ENCODE measurements at regions of chr9 and their contacts with region 1.

Region 1: DNA sequence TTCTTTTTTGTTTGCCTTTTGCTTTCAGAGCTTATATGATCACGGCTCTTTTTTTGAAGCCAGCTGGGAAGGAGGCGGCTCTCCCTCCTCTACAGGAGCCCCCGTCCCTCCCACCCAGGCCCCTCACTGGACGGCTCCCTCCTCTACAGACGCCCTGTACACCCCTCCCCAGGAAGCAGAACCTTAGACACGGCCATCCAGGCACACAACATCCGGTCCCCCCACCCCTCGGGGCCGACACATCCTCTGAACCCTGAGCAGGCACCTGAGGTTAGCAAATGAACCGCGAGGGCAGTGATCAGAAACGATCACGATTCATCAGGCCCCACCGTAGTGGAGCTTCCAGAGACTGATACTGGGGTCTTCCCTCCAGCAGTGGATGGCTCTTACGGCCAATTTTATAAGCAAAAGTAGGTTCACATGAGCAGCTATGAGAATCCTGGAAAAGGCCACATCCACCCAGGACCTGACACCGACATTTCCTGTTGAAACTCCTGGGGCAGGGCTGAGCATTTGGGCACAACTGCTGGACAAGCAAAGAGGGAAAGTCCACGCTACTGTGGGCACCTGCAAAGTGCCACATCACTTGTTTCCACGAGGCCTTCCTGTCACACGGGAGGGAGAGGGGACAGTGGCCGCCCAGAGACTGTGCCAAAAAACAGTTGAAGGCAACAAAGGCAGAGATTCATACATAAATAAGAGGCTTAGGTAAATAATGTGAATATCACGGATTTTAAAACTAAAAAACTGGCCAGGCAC is 78.9 kb downstream of the SEMA4D start:
- DNase-seq: peak; percentile 87
- H3K4me3 Mint-ChIP-seq: peak overlapping the region; percentile 78
- H3K27ac Mint-ChIP-seq: peak overlapping the region; percentile 97
- H3K4me1 Mint-ChIP-seq: peaks cover 99% of the 10 kb centered on the region
- H3K27me3 Mint-ChIP-seq: no peaks in the 10 kb centered on the region

Region 2: GRCh38 chr9:89281106-89281505 is 138.0 kb before region 1 on chr9:
- CTCF ChIA-PET with region 1: no interaction called
- POLR2A ChIA-PET with region 1: no interaction called
- DNase-seq: no peak
- H3K4me3 Mint-ChIP-seq: no peak overlapping the region
- H3K27ac Mint-ChIP-seq: no peak overlapping the region
- H3K4me1 Mint-ChIP-seq: peaks cover 24% of the 10 kb centered on the region
- H3K27me3 Mint-ChIP-seq: peaks cover 6% of the 10 kb centered on the region

Region 3: DNA sequence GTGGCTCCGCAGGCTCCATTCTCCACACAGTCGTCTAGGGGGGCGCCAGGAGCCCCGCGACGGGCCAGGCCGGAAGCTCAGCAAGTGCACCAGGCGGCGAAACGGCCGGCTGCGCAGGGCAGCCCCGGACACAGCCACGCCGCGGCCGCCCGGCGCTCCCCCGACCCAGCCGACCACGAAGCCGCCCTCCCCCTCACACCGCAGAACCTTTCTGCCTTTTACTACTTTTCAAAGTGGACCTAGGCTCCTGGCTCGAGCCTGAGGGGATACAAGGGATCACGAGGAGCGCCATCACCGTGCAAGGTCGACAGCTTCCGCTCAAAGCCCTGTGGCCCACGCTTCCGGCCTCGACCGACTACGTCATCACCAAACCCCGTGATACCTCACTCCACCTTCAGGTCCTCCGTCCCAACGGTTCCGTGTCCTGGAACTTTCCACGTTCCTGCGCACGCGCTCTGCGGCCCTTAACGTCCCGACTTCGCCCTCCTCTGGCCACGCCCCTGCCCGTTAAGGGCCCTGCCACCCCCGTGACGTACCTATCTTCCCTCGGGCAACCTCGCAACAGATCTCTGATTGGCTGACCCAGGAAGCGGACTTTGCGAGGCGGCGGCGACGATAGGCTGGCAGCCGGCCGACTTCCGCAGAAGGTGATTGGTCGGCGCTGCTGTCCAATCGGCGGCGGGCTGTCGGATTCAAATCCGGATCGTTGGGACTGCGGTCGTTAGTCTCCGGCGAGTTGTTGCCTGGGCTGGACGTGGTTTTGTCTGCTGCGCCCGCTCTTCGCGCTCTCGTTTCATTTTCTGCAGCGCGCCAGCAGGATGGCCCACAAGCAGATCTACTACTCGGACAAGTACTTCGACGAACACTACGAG is 108.3 kb before region 1 on chr9 and contains the start of gene CKS2:
- CTCF ChIA-PET with region 1: no interaction called
- POLR2A ChIA-PET with region 1: interaction called, 12 read pairs
- DNase-seq: peak; percentile 100
- H3K4me3 Mint-ChIP-seq: peak within 1 kb of the TSS; percentile 95
- H3K27ac Mint-ChIP-seq: peak within 1 kb of the TSS; percentile 98
- H3K4me1 Mint-ChIP-seq: peaks cover 47% of the 10 kb centered on the region
- H3K27me3 Mint-ChIP-seq: no peaks in the 10 kb centered on the region
- total RNA-seq, gene CKS2: 175 to 180 TPM

Region 4: DNA sequence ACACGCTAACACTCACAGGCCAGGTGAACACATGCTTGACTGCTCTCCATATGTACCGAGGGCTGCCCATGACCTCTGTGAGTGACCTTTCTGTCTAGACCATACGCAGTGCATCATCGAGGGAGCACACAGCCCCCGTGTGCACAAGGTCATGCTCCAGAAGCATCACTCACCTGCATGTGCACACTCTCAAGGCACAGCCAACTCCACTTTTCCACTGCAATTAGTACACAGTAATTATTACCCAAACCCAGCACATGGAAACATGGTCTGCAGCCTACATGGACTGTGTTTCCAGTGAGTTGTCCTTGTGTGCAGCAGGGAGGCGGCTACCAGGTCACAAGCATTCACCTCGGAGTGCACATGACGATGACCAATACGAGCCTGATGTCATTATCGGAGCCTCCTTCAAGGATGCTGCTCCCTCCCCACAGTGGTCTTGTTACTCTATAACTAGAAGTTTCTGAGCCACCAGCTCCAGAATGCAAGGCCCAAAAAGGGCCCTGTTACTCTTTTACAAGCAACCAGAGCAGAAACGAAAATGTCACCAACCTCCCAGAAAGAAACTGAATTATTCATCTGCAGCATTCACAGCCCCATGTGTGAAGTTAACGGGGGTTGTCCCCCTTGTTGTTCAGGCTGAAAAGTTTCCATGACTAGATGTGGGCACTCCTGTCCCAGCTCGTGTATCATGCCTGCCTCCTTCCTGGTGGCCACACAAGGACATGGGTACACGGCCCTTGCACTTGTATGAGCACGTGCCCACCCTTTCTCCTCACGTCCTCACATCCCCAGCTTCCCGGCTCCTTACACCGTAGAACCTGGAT is 47.6 kb after region 1 on chr9:
- CTCF ChIA-PET with region 1: interaction called, 3 read pairs
- POLR2A ChIA-PET with region 1: interaction called, 10 read pairs
- DNase-seq: no peak
- H3K4me3 Mint-ChIP-seq: peak overlapping the region; percentile 40
- H3K27ac Mint-ChIP-seq: peak overlapping the region; percentile 80
- H3K4me1 Mint-ChIP-seq: peaks cover 96% of the 10 kb centered on the region
- H3K27me3 Mint-ChIP-seq: no peaks in the 10 kb centered on the region

Measured in activated CD4-positive, alpha-beta memory T cell treated with anti-CD3 and anti-CD28 coated beads, Interleukin-2, amount 10 ng/mL, durations not matched to agents 7 days and 5 days (primary cell).